A673 (cell line): ENCODE measurements at regions of chr6 and their contacts with region 1.

Region 1: GRCh38 chr6:27312146-27312949 is at the start of gene POM121L2:
- DNase-seq: peak; percentile 72
- H3K4me3 ChIP-seq: peak within 1 kb of the TSS; percentile 60
- H3K27ac ChIP-seq: no peak within 1 kb of the TSS
- H3K4me1 ChIP-seq: no peaks in the 10 kb centered on the region
- H3K27me3 ChIP-seq: no peaks in the 10 kb centered on the region
- CTCF ChIP-seq: peak; percentile 80
- total RNA-seq, gene POM121L2: not detected in 2 replicates

Region 2: GRCh38 chr6:27327023-27327738 is 14.8 kb after region 1 on chr6:
- CTCF ChIA-PET with region 1: no interaction called
- POLR2A ChIA-PET with region 1: interaction called, 10 read pairs
- intact Hi-C with region 1: no loop called
- DNase-seq: no peak
- H3K4me3 ChIP-seq: no peak overlapping the region
- H3K27ac ChIP-seq: no peak overlapping the region
- H3K4me1 ChIP-seq: no peaks in the 10 kb centered on the region
- H3K27me3 ChIP-seq: peaks cover 4% of the 10 kb centered on the region
- CTCF ChIP-seq: no peak

Region 3: GRCh38 chr6:27650620-27651370 is 338.4 kb after region 1 on chr6:
- CTCF ChIA-PET with region 1: no interaction called
- POLR2A ChIA-PET with region 1: no interaction called
- intact Hi-C with region 1: no loop called
- DNase-seq: peak; percentile 86
- H3K4me3 ChIP-seq: peak overlapping the region; percentile 33
- H3K27ac ChIP-seq: no peak overlapping the region
- H3K4me1 ChIP-seq: no peaks in the 10 kb centered on the region
- H3K27me3 ChIP-seq: no peaks in the 10 kb centered on the region
- CTCF ChIP-seq: peak; percentile 36

Region 4: DNA sequence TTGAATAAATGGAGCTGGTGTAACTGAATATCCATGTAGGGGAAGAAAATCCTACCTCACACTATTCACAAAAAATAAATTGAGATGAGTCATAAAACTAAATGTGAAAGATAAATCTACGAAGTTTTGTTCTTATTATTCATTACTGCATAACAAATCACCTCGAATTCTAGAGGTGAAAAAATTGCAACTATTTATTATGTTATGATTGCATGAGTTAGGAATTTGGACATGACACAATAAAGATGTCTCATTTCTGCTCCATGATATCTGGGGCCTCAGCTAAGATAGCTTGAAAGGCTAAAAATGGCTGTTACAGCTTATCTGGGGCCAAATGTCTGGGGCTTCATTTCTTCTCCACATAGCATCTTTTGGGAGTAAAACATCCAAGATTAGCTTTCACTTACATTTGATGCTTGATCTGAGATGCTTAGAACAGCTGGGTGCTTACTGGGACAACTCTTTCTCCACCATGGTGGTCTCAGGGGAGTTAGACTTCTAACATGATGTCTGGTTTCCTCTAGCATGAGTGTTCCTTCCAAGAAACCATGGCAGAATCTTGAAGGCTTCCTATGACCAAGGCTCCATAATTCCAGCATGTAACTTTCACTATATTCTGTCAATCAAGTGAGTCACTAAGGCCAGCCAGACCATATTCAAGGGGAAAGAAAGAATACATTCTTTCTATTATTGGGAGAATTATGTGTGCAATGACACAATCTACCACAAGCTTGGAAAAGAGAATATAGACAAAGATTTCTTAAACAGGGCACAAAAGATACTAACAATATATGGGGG is 674.8 kb after region 1 on chr6:
- CTCF ChIA-PET with region 1: no interaction called
- POLR2A ChIA-PET with region 1: no interaction called
- intact Hi-C with region 1: no loop called
- DNase-seq: no peak
- H3K4me3 ChIP-seq: no peak overlapping the region
- H3K27ac ChIP-seq: no peak overlapping the region
- H3K4me1 ChIP-seq: no peaks in the 10 kb centered on the region
- H3K27me3 ChIP-seq: peaks cover 13% of the 10 kb centered on the region
- CTCF ChIP-seq: no peak

Region 5: GRCh38 chr6:28281288-28282064 is 969.1 kb after region 1 on chr6 and contains the start of gene PGBD1:
- CTCF ChIA-PET with region 1: no interaction called
- POLR2A ChIA-PET with region 1: no interaction called
- intact Hi-C with region 1: no loop called
- DNase-seq: peak; percentile 89
- H3K4me3 ChIP-seq: peak within 1 kb of the TSS; percentile 82
- H3K27ac ChIP-seq: peak within 1 kb of the TSS; percentile 77
- H3K4me1 ChIP-seq: no peaks in the 10 kb centered on the region
- H3K27me3 ChIP-seq: no peaks in the 10 kb centered on the region
- CTCF ChIP-seq: no peak
- total RNA-seq, gene PGBD1: 11.3 and 11.6 TPM in 2 replicates